ENCODE measurements at regions of chr10 and their contacts with region 1.

Region 1: GRCh38 chr10:30433730-30434272 is at the start of gene MAP3K8:
- DNase-seq: peak; percentile 72
- H3K4me3 ChIP-seq: peak within 1 kb of the TSS; percentile 72
- H3K27ac ChIP-seq: peak within 1 kb of the TSS; percentile 92
- H3K27me3 ChIP-seq: no peaks in the 10 kb centered on the region
- CTCF ChIP-seq: no peak

Region 2: GRCh38 chr10:30374353-30374752 is 59.4 kb before region 1 on chr10:
- in situ Hi-C with region 1: no loop called
- DNase-seq: no peak
- H3K4me3 ChIP-seq: no peak overlapping the region
- H3K27ac ChIP-seq: no peak overlapping the region
- H3K27me3 ChIP-seq: no peaks in the 10 kb centered on the region
- CTCF ChIP-seq: no peak

Region 3: DNA sequence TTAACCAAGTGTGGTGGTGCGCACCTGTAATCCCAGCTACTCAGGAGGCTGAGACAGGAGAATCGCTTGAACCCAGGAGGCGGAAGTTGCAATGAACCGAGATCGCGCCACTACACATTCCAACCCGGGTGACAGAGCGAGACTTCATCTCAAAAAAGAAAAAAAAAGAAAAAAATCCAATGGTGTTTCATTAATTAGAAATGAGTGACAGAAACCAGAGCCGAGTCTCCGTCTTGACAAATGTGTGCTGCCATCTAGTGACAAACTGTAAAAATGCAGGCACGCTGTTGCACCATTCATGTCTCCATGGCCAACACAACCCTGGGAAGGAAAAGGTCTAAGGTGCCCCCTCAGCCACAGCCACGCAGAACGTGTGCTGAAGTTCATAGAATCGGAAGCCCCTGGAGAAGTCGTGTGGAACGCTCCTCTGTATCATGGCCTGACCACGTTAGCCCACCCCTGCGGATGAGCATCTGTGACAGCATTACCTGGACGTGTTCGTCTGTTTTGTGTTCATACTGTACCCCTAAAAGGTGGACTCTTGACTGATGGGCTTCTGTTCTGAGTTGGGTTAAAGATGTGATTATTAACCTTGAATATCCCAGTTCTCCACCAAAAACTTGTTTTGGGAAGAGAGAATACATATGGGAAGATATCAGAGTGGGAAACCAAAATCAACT is 100.8 kb after region 1 on chr10:
- in situ Hi-C with region 1: loop called (anchors 25 kb)
- DNase-seq: peak; percentile 66
- H3K4me3 ChIP-seq: no peak overlapping the region
- H3K27ac ChIP-seq: no peak overlapping the region
- H3K27me3 ChIP-seq: no peaks in the 10 kb centered on the region
- CTCF ChIP-seq: peak; percentile 84

Region 4: DNA sequence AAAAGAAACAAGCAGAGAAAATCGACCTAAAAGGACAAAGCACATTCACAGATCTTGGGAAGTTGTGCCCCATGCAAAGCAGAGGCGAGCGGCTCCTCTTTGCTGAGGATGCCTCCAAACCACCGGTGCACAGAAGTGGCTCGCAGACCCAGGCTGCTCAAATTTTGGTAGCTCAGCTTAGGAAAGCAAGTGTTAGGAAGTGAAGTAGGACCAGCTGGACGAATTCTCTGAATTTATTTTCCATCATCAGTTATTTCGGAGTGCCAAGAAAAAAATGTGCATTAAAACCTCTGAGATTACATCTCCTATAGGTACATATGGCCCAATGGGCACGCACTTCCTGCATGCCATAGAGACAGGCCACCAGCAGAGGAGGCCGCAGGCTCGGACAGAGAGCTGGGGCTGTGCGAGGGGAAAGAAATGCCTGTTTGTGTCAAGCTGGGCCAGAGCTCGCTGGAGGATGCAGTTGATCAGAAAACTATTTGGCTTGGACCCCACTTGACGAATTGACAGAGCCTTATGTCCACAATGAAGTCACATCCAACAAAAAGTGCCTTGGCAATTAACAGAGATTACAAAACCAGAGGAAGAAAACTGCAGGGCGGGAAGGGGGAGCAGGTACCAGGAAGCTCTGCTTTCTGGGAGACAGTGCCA is 318.0 kb after region 1 on chr10:
- in situ Hi-C with region 1: no loop called
- DNase-seq: peak; percentile 53
- H3K4me3 ChIP-seq: no peak overlapping the region
- H3K27ac ChIP-seq: no peak overlapping the region
- H3K27me3 ChIP-seq: no peaks in the 10 kb centered on the region
- CTCF ChIP-seq: peak; percentile 96